ENCODE measurements at regions of chr1 and their contacts with region 1.

Region 1: DNA sequence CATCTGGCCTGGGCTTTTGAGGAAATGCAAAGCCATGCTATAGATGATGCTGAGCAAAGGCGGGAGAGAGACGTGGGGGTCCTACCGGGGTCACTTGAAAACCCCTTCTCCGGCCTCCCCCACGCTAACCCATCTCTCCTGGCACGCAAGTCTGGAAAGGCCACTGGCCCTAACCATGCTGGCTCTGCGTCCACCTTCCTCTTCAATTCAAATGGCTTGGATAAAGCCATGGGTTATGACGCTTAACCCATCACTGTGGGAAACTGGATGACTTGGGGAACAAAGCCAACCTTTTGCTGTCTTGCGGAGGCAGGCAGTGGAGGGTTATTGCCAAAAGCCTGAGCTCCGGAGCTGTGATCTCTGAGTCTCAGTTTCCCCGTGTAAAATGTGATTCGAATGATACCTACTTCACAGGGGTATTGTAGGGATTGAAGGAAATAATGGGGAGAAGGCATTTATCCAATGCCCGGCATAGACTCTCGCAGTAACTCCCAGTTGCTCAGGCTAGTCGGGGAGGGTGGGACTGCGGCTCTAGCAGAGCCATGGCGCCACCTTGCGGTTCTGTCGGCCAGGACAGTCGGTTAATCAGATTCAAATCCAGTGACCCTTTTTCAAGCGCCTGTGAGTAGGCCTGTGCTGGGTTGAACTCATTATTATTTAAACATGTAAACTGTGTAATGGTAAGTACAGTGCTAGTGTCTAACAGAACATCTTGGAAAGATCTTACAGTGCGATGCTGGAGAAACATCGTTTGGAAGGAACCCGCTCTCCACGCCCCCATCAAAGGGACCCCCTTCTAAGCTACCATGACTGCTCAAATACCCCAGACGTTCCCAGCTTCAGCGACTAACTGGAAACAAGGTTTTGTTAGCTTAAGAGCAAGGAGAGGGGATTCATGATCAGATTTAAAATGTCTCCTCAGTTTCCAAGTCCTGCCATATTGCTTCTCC is 20.3 kb downstream of the NEK2 start:
- DNase-seq: peak; percentile 93
- H3K4me3 Mint-ChIP-seq: no peak overlapping the region
- H3K27ac Mint-ChIP-seq: no peak overlapping the region
- H3K4me1 Mint-ChIP-seq: peaks cover 16% of the 10 kb centered on the region
- H3K27me3 Mint-ChIP-seq: no peaks in the 10 kb centered on the region
- CTCF ChIP-seq: peak; percentile 93

Region 2: GRCh38 chr1:211356723-211357407 is 298.2 kb before region 1 on chr1:
- CTCF ChIA-PET with region 1: no interaction called
- intact Hi-C with region 1: no loop called
- DNase-seq: no peak
- H3K4me3 Mint-ChIP-seq: no peak overlapping the region
- H3K27ac Mint-ChIP-seq: no peak overlapping the region
- H3K4me1 Mint-ChIP-seq: no peaks in the 10 kb centered on the region
- H3K27me3 Mint-ChIP-seq: no peaks in the 10 kb centered on the region
- CTCF ChIP-seq: no peak

Region 3: DNA sequence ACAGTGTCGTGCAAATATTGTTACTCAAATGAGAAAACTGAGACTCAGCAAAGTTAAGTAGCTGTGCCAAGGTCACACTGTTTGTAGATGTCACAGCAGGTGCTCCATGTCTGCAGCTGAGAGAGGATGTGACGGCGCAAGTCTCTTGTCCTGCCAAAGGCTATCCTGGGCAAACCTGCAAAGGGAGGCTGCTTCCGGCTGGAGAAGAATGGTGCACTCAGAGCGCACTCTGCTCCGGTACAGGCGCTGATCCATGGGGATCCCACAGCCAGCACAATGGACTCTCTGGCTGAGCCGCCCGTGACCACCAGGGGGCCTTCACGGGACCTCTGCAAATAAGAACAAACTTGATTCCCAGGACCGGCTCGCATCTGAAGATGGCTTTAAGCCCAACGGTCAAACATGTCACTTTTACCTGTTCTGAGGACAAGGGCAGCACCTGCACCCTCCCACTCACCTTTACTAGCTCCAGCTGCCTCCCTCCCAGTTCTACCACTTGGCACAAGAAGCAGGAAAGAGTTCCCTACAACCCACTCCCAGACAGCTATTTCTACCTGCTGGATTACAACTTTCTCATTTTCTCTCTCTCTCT is 185.1 kb before region 1 on chr1:
- CTCF ChIA-PET with region 1: interaction called, 4 read pairs
- intact Hi-C with region 1: loop called (anchors 1 kb)
- DNase-seq: peak; percentile 94
- H3K4me3 Mint-ChIP-seq: no peak overlapping the region
- H3K27ac Mint-ChIP-seq: no peak overlapping the region
- H3K4me1 Mint-ChIP-seq: peaks cover 13% of the 10 kb centered on the region
- H3K27me3 Mint-ChIP-seq: no peaks in the 10 kb centered on the region
- CTCF ChIP-seq: peak; percentile 98